CD4-positive, alpha-beta T cell (primary cell): ENCODE measurements at regions of chr10 and their contacts with region 1.

Region 1: GRCh38 chr10:110225756-110226542 is 18.5 kb downstream of the MXI1 start:
- DNase-seq: peak; percentile 78 to 96 (median 87)
- ATAC-seq: peak; percentile 49
- H3K4me3 ChIP-seq: peak overlapping the region; percentile 81
- H3K4me3 Mint-ChIP-seq: peak overlapping the region; percentile 99
- H3K27ac ChIP-seq: peak overlapping the region; percentile 75 to 84
- H3K27ac Mint-ChIP-seq: peak overlapping the region; percentile 96
- H3K4me1 ChIP-seq: peaks cover 32% of the 10 kb centered on the region
- H3K4me1 Mint-ChIP-seq: peaks cover 38% of the 10 kb centered on the region
- H3K27me3 ChIP-seq: no peaks in the 10 kb centered on the region
- H3K27me3 Mint-ChIP-seq: no peaks in the 10 kb centered on the region
- CTCF ChIP-seq: peak; percentile 55

Region 2: DNA sequence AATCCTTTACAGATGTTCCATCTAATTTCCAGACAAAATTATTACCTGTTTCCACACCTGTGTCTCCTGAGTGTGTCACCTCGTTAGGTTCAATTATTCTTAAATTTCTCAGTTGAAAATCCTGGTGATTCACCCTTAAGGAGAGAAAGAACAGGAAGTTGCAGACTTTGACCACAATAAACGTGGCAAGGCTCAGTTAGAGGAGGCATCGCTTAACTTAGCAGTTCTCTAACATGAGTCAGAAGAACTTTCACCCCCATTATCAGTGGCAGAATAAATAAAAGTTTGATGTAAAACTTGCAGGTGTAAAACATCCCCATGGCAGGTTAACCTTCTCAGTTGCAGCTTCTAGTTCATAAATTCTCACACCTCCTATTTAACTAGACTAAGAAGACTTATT is 311.0 kb before region 1 on chr10:
- CTCF ChIA-PET with region 1: no interaction called
- POLR2A ChIA-PET with region 1: no interaction called
- intact Hi-C with region 1: loop called (anchors 5 to 10 kb)
- DNase-seq: peak in 12 of 14 experiments; percentile 8 to 88 (median 30)
- ATAC-seq: peak; percentile 95
- H3K4me3 ChIP-seq: no peak overlapping the region
- H3K4me3 Mint-ChIP-seq: peak overlapping the region; percentile 74
- H3K27ac ChIP-seq: peak overlapping the region in 1 of 2 donors; percentile 38
- H3K27ac Mint-ChIP-seq: peak overlapping the region; percentile 71
- H3K4me1 ChIP-seq: peaks cover 48% of the 10 kb centered on the region
- H3K4me1 Mint-ChIP-seq: peaks cover 78% of the 10 kb centered on the region
- H3K27me3 ChIP-seq: no peaks in the 10 kb centered on the region
- H3K27me3 Mint-ChIP-seq: no peaks in the 10 kb centered on the region
- CTCF ChIP-seq: no peak

Region 3: DNA sequence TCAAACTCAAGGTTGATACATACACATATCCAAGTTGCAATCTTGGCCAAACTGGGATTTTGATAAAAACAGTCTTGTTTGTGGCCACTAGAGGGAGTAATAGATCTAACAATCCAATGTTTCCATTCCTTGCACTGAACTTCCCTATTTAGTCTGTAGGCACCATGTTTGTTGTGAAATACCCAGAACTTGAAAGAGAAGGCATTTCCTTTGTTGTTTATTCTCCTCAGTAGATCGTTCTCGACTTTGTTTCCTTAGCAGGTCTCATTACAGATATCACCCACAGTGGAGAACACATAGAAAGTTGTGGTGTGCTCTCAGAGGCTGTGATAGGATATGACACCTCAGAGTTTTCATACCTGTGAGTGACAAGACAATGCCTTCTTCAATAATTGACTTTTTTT is 88.8 kb before region 1 on chr10:
- CTCF ChIA-PET with region 1: interaction called, 6 read pairs
- POLR2A ChIA-PET with region 1: interaction called, 6 read pairs
- intact Hi-C with region 1: loop called (anchors 1 to 2 kb)
- DNase-seq: peak in 3 of 14 experiments; percentile 74 to 79 (median 77)
- ATAC-seq: peak; percentile 74
- H3K4me3 ChIP-seq: no peak overlapping the region
- H3K4me3 Mint-ChIP-seq: no peak overlapping the region
- H3K27ac ChIP-seq: no peak overlapping the region
- H3K27ac Mint-ChIP-seq: peak overlapping the region; percentile 35
- H3K4me1 ChIP-seq: peaks cover 5% of the 10 kb centered on the region
- H3K4me1 Mint-ChIP-seq: peaks cover 31% of the 10 kb centered on the region
- H3K27me3 ChIP-seq: no peaks in the 10 kb centered on the region
- H3K27me3 Mint-ChIP-seq: no peaks in the 10 kb centered on the region
- CTCF ChIP-seq: peak; percentile 93

Region 4: DNA sequence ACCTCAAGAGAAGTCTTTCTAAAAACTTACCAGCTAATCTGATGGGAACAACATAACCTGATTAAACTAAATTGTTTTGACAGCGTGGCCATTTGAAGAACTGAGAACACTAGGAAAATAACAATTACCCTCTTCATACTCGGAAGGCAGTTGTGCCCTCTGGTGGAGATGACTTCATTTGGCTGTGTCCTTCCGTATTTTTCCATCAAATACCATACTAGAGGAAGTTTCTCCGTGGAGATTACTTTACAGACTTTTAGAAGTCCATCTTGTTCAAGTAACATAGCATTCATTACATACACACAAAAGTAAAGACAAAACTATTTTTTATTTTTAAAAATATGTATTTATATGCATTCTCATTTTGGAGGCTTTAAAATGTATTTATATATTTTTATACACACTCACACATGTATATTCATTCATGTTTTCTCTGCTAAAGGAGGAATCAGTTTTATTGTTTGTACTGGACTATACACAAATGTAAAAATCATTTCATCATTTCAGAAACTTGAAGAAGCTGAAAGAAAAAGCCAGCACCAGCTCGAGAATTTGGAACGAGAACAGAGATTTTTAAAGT is 53.5 kb after region 1 on chr10:
- CTCF ChIA-PET with region 1: interaction called, 4 read pairs
- POLR2A ChIA-PET with region 1: interaction called, 5 read pairs
- intact Hi-C with region 1: loop called (anchors 2 to 5 kb)
- DNase-seq: peak in 13 of 14 experiments; percentile 9 to 80 (median 28)
- ATAC-seq: peak; percentile 78
- H3K4me3 ChIP-seq: no peak overlapping the region
- H3K4me3 Mint-ChIP-seq: no peak overlapping the region
- H3K27ac ChIP-seq: no peak overlapping the region
- H3K27ac Mint-ChIP-seq: no peak overlapping the region
- H3K4me1 ChIP-seq: peaks cover 5% of the 10 kb centered on the region
- H3K4me1 Mint-ChIP-seq: peaks cover 44% of the 10 kb centered on the region
- H3K27me3 ChIP-seq: no peaks in the 10 kb centered on the region
- H3K27me3 Mint-ChIP-seq: no peaks in the 10 kb centered on the region
- CTCF ChIP-seq: peak; percentile 70

Region 5: DNA sequence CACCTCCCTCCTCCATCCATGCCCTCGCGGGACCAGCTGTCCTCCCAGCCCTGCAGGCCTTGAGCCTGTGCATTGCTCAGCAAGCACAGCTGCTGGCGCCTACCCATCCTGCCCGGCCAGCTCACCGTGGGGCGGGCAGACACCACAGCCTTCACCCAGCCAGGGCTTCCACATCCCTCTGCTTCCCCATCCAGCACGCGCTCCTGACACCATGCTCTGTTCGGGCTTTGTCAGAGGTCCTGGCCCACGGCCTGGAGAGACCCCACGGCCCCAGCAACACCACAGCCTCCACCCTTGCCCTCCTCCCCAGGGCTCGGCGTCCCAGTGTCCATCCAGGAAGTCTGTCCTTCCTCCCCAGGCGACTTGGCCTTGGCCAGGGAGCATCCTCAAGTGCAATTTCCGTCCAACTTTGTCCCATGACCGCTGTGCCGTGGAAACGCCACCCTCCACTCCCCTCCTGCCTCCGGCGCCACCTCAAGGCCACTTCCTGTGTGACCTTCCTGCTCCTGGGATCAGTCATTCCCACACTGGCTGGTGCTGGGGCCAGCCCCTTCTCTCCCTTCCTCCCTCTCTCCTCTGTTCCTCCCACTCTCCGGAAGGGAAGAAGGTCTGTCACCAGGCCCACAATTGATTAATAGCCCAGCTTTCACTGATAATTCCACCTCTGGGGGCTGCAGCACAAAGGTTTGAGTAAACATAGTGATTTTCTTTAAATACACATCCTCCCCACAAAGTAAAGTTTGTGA is 150.2 kb after region 1 on chr10:
- CTCF ChIA-PET with region 1: no interaction called
- POLR2A ChIA-PET with region 1: no interaction called
- intact Hi-C with region 1: no loop called
- DNase-seq: no peak
- ATAC-seq: no peak
- H3K4me3 ChIP-seq: no peak overlapping the region
- H3K4me3 Mint-ChIP-seq: no peak overlapping the region
- H3K27ac ChIP-seq: no peak overlapping the region
- H3K27ac Mint-ChIP-seq: no peak overlapping the region
- H3K4me1 ChIP-seq: no peaks in the 10 kb centered on the region
- H3K4me1 Mint-ChIP-seq: no peaks in the 10 kb centered on the region
- H3K27me3 ChIP-seq: no peaks in the 10 kb centered on the region
- H3K27me3 Mint-ChIP-seq: no peaks in the 10 kb centered on the region
- CTCF ChIP-seq: no peak

Region 6: GRCh38 chr10:110497438-110498086 is 271.6 kb after region 1 on chr10 and contains the start of gene DUSP5:
- CTCF ChIA-PET with region 1: no interaction called
- POLR2A ChIA-PET with region 1: no interaction called
- intact Hi-C with region 1: loop called in 1 of 2 experiments (anchors 5 kb)
- DNase-seq: peak; percentile 89 to 98 (median 95)
- ATAC-seq: peak; percentile 83
- H3K4me3 ChIP-seq: peak within 1 kb of the TSS; percentile 80
- H3K4me3 Mint-ChIP-seq: peak within 1 kb of the TSS; percentile 96
- H3K27ac ChIP-seq: peak within 1 kb of the TSS; percentile 53 to 64
- H3K27ac Mint-ChIP-seq: peak within 1 kb of the TSS; percentile 84
- H3K4me1 ChIP-seq: peaks cover 62% of the 10 kb centered on the region
- H3K4me1 Mint-ChIP-seq: peaks cover 63% of the 10 kb centered on the region
- H3K27me3 ChIP-seq: no peaks in the 10 kb centered on the region
- H3K27me3 Mint-ChIP-seq: no peaks in the 10 kb centered on the region
- CTCF ChIP-seq: no peak
- total RNA-seq, gene DUSP5: 64.3 to 66.2 TPM

Region 7: DNA sequence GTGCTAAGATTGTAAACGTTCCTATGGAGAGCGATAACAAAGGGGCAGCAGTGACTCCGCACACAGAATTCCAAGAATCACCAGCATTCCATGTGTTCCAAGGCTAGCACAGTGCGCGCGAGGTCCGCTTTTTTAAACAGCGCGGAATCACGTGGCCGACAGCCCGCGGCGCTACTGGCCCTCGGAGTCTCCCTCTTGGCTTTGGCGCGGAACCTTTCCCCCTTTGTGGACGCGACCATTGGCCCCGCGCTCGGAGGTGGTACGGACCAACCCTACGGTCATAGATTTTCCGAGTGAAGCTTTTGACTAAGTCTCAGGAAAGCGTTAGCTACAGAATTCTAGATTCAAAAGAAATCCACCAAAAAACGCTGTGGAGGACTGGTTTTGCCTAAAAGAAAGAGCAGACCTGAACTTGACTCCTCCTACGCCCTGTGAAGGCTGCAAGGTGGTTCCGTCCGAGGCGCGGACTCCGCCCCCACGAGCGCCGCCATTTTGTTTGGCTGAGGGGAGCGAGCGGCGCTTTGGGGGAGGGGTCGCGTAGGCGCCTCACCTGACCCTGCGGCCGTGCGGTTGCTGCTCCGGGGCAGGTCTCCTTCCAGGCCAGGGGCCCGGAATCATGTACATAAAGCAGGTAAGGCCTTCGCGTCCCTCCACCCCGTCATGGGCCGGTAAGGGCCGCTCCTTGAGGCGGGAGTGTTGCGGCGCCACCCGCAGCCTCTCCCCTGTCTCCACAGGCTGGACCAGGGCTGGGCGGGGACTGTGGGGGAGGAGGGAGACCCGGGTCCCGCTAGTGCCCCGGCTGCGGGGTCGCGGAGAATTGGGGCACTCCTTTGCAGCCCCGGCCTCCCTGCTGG is 341.5 kb after region 1 on chr10 and contains the start of gene SMC3:
- CTCF ChIA-PET with region 1: no interaction called
- POLR2A ChIA-PET with region 1: no interaction called
- intact Hi-C with region 1: loop called in 1 of 2 experiments (anchors 5 kb)
- DNase-seq: peak; percentile 82 to 96 (median 88)
- ATAC-seq: peak; percentile 86
- H3K4me3 ChIP-seq: peak within 1 kb of the TSS; percentile 96
- H3K4me3 Mint-ChIP-seq: peak within 1 kb of the TSS; percentile 98
- H3K27ac ChIP-seq: peak within 1 kb of the TSS; percentile 79 to 83
- H3K27ac Mint-ChIP-seq: peak within 1 kb of the TSS; percentile 97
- H3K4me1 ChIP-seq: peaks cover 24% of the 10 kb centered on the region
- H3K4me1 Mint-ChIP-seq: peaks cover 49% of the 10 kb centered on the region
- H3K27me3 ChIP-seq: no peaks in the 10 kb centered on the region
- H3K27me3 Mint-ChIP-seq: peaks cover 21% of the 10 kb centered on the region
- CTCF ChIP-seq: no peak
- total RNA-seq, gene SMC3: 46.8 to 48.0 TPM